GM23248 (cell line): ENCODE measurements at regions of chr20 and their contacts with region 1.

Region 1: DNA sequence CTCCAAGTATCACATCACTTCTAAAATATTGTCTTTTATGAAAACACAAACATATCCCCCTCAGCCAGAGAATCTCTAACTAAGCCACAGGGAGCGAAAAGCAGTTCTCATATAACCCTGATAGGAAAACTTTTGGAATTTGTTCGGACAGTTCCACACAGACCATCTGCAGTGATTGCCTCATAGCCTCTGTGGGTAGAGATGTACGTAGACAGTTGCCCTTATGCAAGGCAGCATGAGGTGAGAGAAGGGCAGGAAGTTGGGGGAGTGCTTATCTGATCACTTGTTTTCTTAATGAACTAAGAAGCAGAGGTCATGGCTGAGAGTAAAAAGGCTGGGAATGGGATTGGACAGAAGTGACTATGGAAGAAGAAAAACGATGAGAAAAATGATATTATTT is 39.6 kb downstream of the SLC23A2 start:
- DNase-seq: peak; percentile 20
- H3K4me3 ChIP-seq: no peak overlapping the region
- H3K27ac ChIP-seq: no peak overlapping the region
- H3K4me1 ChIP-seq: no peaks in the 10 kb centered on the region
- H3K27me3 ChIP-seq: no peaks in the 10 kb centered on the region

Region 2: DNA sequence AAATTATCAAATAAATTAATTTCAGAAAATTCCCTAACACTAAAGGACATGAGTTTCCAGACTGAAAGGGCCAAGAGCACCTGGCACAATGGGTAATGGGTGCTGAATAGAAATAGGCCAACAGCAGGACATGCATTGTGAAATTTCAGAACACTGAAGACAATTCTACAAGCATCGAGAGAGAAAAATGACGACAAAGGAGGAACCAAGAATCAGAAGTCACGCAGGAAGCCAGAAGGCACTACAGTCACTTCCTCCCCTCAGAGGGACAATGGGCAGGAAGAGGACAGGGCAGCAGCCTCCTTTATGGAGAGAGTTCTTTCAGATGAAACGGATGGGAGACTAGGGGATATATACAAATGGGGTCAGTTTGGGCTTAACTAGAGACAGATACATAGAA is 128.4 kb after region 1 on chr20:
- in situ Hi-C with region 1: loop called (anchors 10 kb)
- DNase-seq: no peak
- H3K4me3 ChIP-seq: no peak overlapping the region
- H3K27ac ChIP-seq: no peak overlapping the region
- H3K4me1 ChIP-seq: no peaks in the 10 kb centered on the region
- H3K27me3 ChIP-seq: no peaks in the 10 kb centered on the region